PC-9 (cell line): ENCODE measurements at regions of chr6 and their contacts with region 1.

Region 1: GRCh38 chr6:14489445-14489844 is 371.9 kb downstream of the CD83 start:
- DNase-seq: no peak
- H3K4me3 ChIP-seq: no peak overlapping the region
- H3K27ac ChIP-seq: no peak overlapping the region
- H3K4me1 ChIP-seq: no peaks in the 10 kb centered on the region
- H3K27me3 ChIP-seq: no peaks in the 10 kb centered on the region
- CTCF ChIP-seq: no peak

Region 2: DNA sequence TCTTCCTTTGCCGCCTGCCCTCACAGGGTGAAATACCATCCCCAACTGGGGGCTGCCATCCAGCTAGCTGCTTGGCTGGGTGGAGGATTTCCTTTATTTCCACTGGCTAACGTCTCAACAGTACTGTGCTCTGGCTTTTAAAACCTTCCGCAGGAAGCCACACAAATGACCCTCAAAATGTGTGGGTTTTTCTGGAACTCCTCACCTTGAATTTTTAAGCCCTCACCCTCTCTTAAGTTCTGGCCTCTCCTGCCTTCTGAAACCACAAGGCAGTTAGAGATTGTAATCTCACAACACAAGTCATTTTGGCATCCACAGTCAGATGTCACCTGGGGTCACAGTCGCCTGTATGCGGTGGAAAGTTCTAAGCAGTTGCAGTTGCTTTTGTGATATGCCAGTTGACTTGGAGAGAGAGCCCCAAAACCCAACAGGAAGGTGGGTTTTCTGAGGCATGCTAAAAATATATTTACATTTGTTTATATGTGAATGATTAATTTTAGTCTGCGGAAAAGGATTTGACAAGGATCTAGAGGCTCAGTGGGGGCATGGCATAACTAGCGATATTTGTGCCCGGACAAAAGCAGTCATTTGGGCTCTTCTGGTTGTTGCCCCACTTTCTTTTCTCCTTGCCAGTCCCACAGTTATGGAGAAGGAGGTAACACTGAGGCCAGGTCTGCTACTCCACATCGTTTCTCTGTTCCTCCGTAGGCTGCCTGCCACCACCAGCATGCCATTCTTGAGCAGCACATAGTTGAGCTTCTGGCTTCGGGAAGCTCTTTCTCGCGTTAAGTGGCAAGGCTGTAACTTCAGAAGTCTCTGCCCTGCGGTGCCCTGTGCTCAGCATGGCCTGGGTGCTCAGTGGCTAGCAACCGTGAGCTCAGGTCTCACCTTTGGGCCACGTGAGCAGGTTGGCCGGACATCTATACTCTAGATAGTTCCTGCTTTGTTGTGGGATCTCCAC is 36.6 kb before region 1 on chr6:
- CTCF ChIA-PET with region 1: no interaction called
- POLR2A ChIA-PET with region 1: no interaction called
- intact Hi-C with region 1: no loop called
- DNase-seq: no peak
- H3K4me3 ChIP-seq: no peak overlapping the region
- H3K27ac ChIP-seq: no peak overlapping the region
- H3K4me1 ChIP-seq: no peaks in the 10 kb centered on the region
- H3K27me3 ChIP-seq: no peaks in the 10 kb centered on the region
- CTCF ChIP-seq: no peak

Region 3: DNA sequence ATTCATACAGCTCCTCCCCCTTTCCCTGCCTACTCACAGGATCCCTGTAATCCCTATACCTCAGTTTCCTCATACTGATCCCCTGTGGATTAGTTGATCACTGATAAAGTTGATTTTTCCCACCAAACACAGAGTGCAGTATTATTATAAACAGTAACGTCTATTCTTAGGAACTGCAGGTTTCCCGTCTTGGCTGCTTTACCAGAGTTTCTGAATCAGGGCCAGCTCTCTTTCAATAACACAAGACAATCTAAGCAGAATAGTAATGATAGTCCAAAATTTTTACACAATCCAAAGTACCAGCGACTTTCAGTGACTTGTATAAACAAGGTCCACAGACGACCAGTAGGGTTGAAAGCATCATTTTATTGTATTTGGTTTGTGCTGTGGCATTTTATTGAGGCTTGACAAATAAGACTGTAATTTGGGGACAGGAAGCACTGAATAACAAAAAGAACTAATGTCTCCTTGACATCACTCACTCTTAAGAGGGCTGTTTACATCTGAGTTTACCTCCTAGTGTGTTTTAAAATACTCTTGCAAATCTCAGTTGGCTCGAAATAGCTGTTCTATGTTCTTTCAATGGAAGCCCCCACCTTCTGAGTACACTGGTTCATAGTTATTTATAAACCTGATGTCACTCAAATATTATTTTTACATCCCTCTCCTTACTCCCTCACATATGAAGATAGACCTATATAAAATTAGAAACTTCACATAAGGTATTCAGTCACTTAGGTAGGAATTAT is 750.3 kb after region 1 on chr6:
- CTCF ChIA-PET with region 1: no interaction called
- POLR2A ChIA-PET with region 1: interaction called, 19 read pairs
- intact Hi-C with region 1: no loop called
- DNase-seq: no peak
- H3K4me3 ChIP-seq: no peak overlapping the region
- H3K27ac ChIP-seq: no peak overlapping the region
- H3K4me1 ChIP-seq: peaks cover 20% of the 10 kb centered on the region
- H3K27me3 ChIP-seq: no peaks in the 10 kb centered on the region
- CTCF ChIP-seq: no peak